ENCODE measurements at regions of chr12 and their contacts with region 1.

Region 1: GRCh38 chr12:64679487-64679983 is 69.2 kb downstream of the RASSF3 start:
- DNase-seq: peak in 2 of 6 donors; percentile 28 to 45
- ATAC-seq: peak in 3 of 4 donors; percentile 7 to 48 (median 24)
- H3K4me3 ChIP-seq: no peak overlapping the region
- H3K27ac ChIP-seq: peak overlapping the region in 2 of 4 donors; percentile 8 to 38
- H3K4me1 ChIP-seq: peaks cover 9 to 33% (median 21%) of the 10 kb centered on the region in 3 donors
- H3K27me3 ChIP-seq: no peaks in the 10 kb centered on the region
- CTCF ChIP-seq: no peak

Region 2: GRCh38 chr12:64608901-64609535 is 70.5 kb before region 1 on chr12:
- intact Hi-C with region 1: loop called in 1 of 3 experiments (anchors 10 kb)
- DNase-seq: peak in 1 of 6 donors; percentile 14
- ATAC-seq: peak in 3 of 4 donors; percentile 5 to 21 (median 11)
- H3K4me3 ChIP-seq: peak overlapping the region; percentile 12 to 96 (median 80)
- H3K27ac ChIP-seq: peak overlapping the region; percentile 76 to 87 (median 82)
- H3K4me1 ChIP-seq: peaks cover 0 to 8% (median 0%) of the 10 kb centered on the region in 3 donors
- H3K27me3 ChIP-seq: no peaks in the 10 kb centered on the region
- CTCF ChIP-seq: no peak

Region 3: GRCh38 chr12:64733857-64734256 is 54.3 kb after region 1 on chr12:
- intact Hi-C with region 1: no loop called
- DNase-seq: peak in 3 of 6 donors; percentile 29 to 61 (median 44)
- ATAC-seq: peak; percentile 56 to 76 (median 66)
- H3K4me3 ChIP-seq: no peak overlapping the region
- H3K27ac ChIP-seq: no peak overlapping the region
- H3K4me1 ChIP-seq: no peaks in the 10 kb centered on the region
- H3K27me3 ChIP-seq: no peaks in the 10 kb centered on the region
- CTCF ChIP-seq: no peak

Region 4: GRCh38 chr12:64814432-64814831 is 134.9 kb after region 1 on chr12:
- intact Hi-C with region 1: no loop called
- DNase-seq: no peak
- ATAC-seq: peak in 3 of 4 donors; percentile 10 to 19 (median 15)
- H3K4me3 ChIP-seq: no peak overlapping the region
- H3K27ac ChIP-seq: no peak overlapping the region
- H3K4me1 ChIP-seq: peaks cover 4 to 11% (median 6%) of the 10 kb centered on the region in 3 donors
- H3K27me3 ChIP-seq: no peaks in the 10 kb centered on the region
- CTCF ChIP-seq: no peak

Region 5: GRCh38 chr12:64858882-64859605 is 179.5 kb after region 1 on chr12:
- intact Hi-C with region 1: no loop called
- DNase-seq: no peak
- ATAC-seq: no peak
- H3K4me3 ChIP-seq: no peak overlapping the region
- H3K27ac ChIP-seq: no peak overlapping the region
- H3K4me1 ChIP-seq: no peaks in the 10 kb centered on the region
- H3K27me3 ChIP-seq: no peaks in the 10 kb centered on the region
- CTCF ChIP-seq: no peak